Heart right ventricle (tissue), 16 donors: ENCODE measurements at regions of chr2 and their contacts with region 1.

Region 1: DNA sequence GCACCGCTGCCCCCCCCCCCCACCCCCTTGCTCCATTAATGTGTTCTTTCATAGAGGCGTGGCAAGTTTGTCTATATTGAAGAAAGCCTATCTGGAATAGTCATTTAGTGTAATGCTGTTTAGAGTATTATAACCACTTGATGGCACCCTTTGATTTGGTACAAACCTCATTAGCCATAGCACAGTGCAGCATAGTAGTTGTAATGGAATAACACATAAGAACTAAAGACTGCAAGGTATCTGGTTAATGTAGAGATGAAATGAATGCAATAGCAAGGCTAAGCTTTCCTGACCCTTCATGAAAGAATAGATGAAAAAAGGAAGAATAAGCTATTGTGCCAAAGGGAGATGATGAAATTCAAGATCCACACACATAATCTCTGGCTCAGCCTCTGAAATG is 81.9 kb downstream of the EHBP1 start:
- DNase-seq: no peak
- ATAC-seq: peak in 7 of 8 donors; percentile 53 to 85 (median 75)
- H3K4me3 ChIP-seq: no peak overlapping the region
- H3K27ac ChIP-seq: no peak overlapping the region
- H3K4me1 ChIP-seq: peaks cover 0 to 11% (median 0%) of the 10 kb centered on the region in 9 donors
- H3K27me3 ChIP-seq: no peaks in the 10 kb centered on the region
- CTCF ChIP-seq: peak in 7 of 9 donors; percentile 34 to 60 (median 51)

Region 2: DNA sequence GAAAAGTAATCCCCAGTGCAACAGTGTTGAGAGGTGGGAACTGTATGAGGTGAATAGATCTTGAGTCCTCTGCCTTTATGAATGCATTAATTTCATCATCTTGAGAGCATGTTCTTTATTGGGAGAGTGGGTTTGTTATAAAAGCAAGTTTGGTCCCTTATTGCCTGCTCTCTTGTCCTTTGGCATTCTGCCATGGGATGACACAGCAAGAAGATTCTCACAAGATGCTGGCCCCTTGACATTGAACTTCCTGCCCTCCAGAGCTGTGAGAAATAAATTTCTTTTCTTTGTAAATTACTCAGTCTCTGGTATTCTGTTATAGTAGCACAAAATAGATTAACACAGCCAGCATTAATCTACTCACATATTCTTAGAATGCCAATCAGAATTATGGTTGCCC is 26.7 kb after region 1 on chr2:
- intact Hi-C with region 1: no loop called
- DNase-seq: peak in 1 of 2 donors; percentile 25
- ATAC-seq: peak in 2 of 8 donors; percentile 37 to 42
- H3K4me3 ChIP-seq: no peak overlapping the region
- H3K27ac ChIP-seq: no peak overlapping the region
- H3K4me1 ChIP-seq: peaks cover 0 to 12% (median 0%) of the 10 kb centered on the region in 9 donors
- H3K27me3 ChIP-seq: no peaks in the 10 kb centered on the region
- CTCF ChIP-seq: no peak

Region 3: GRCh38 chr2:63023444-63023843 is 236.1 kb after region 1 on chr2:
- intact Hi-C with region 1: loop called in 3 of 10 experiments (anchors 10 kb)
- DNase-seq: no peak
- ATAC-seq: no peak
- H3K4me3 ChIP-seq: no peak overlapping the region
- H3K27ac ChIP-seq: no peak overlapping the region
- H3K4me1 ChIP-seq: no peaks in the 10 kb centered on the region
- H3K27me3 ChIP-seq: no peaks in the 10 kb centered on the region
- CTCF ChIP-seq: peak in 7 of 9 donors; percentile 18 to 44 (median 33)

Region 4: DNA sequence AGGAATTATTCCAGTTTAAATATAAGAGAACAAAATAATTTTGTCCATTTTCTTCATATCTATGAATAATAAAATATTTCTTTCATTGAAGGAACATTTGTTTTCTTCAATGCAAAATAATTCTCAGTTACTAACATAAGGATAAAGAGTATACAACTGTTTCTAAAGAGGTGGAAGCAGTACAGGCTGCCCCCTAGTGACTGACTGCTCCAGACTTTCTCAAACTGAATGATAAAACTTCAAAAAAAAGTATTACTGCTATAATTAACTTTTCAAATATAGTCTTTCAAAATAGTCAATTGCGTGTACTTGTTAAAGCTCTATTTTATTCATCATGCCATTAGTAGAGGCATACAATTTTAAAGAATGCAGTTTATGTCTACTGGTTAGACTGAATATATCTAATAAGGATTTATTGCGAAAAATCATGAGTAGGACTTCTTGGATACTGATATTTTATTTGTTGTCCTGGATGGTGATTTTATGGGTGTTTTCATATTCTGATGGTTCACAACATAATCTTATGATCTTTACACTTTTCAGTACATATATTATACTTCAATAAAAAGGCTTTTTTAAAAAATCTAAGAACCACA is 700.8 kb after region 1 on chr2:
- intact Hi-C with region 1: loop called in 3 of 10 experiments (anchors 1 to 10 kb)
- DNase-seq: peak in 1 of 2 donors; percentile 5
- ATAC-seq: no peak
- H3K4me3 ChIP-seq: no peak overlapping the region
- H3K27ac ChIP-seq: no peak overlapping the region
- H3K4me1 ChIP-seq: peaks cover 0 to 6% (median 0%) of the 10 kb centered on the region in 9 donors
- H3K27me3 ChIP-seq: no peaks in the 10 kb centered on the region
- CTCF ChIP-seq: peak in 8 of 9 donors; percentile 28 to 76 (median 62)